Left lung (tissue), 14 donors: ENCODE measurements at regions of chr19 and their contacts with region 1.

Region 1: GRCh38 chr19:16247353-16248182 is 49.9 kb downstream of the AP1M1 start:
- DNase-seq: peak; percentile 76 to 97 (median 86)
- ATAC-seq: peak; percentile 98
- H3K4me3 ChIP-seq: no peak overlapping the region
- H3K27ac ChIP-seq: no peak overlapping the region
- H3K4me1 ChIP-seq: peaks cover 0 to 26% of the 10 kb centered on the region in 2 donors
- H3K27me3 ChIP-seq: no peaks in the 10 kb centered on the region
- CTCF ChIP-seq: peak; percentile 88 to 96

Region 2: GRCh38 chr19:16160943-16161560 is 86.5 kb before region 1 on chr19:
- intact Hi-C with region 1: no loop called
- DNase-seq: no peak
- ATAC-seq: no peak
- H3K4me3 ChIP-seq: no peak overlapping the region
- H3K27ac ChIP-seq: no peak overlapping the region
- H3K4me1 ChIP-seq: peaks cover 0 to 14% of the 10 kb centered on the region in 2 donors
- H3K27me3 ChIP-seq: no peaks in the 10 kb centered on the region
- CTCF ChIP-seq: no peak

Region 3: GRCh38 chr19:16175954-16176353 is 71.6 kb before region 1 on chr19:
- intact Hi-C with region 1: no loop called
- DNase-seq: no peak
- ATAC-seq: no peak
- H3K4me3 ChIP-seq: no peak overlapping the region
- H3K27ac ChIP-seq: no peak overlapping the region
- H3K4me1 ChIP-seq: no peaks in the 10 kb centered on the region
- H3K27me3 ChIP-seq: peaks cover 0 to 3% of the 10 kb centered on the region in 2 donors
- CTCF ChIP-seq: no peak

Region 4: GRCh38 chr19:16382775-16383543 is 135.4 kb after region 1 on chr19:
- intact Hi-C with region 1: loop called (anchors 2 to 10 kb)
- DNase-seq: peak; percentile 79 to 92 (median 86)
- ATAC-seq: peak; percentile 90
- H3K4me3 ChIP-seq: no peak overlapping the region
- H3K27ac ChIP-seq: peak overlapping the region; percentile 75 to 78
- H3K4me1 ChIP-seq: peaks cover 8 to 25% of the 10 kb centered on the region in 2 donors
- H3K27me3 ChIP-seq: no peaks in the 10 kb centered on the region
- CTCF ChIP-seq: peak; percentile 71 to 82

Region 5: GRCh38 chr19:16659831-16660708 is 412.5 kb after region 1 on chr19 and contains the start of gene SMIM7:
- intact Hi-C with region 1: no loop called
- DNase-seq: peak; percentile 98 to 99 (median 99)
- ATAC-seq: peak; percentile 97
- H3K4me3 ChIP-seq: peak within 1 kb of the TSS; percentile 74 to 81
- H3K27ac ChIP-seq: peak within 1 kb of the TSS; percentile 87 to 89
- H3K4me1 ChIP-seq: peaks cover 13 to 57% of the 10 kb centered on the region in 2 donors
- H3K27me3 ChIP-seq: no peaks in the 10 kb centered on the region
- CTCF ChIP-seq: peak in 1 of 2 donors; percentile 27
- polyA plus RNA-seq, gene SMIM7: 98.5 to 112 (median 102) TPM